ENCODE measurements at regions of chr3 and their contacts with region 1.

Region 1: DNA sequence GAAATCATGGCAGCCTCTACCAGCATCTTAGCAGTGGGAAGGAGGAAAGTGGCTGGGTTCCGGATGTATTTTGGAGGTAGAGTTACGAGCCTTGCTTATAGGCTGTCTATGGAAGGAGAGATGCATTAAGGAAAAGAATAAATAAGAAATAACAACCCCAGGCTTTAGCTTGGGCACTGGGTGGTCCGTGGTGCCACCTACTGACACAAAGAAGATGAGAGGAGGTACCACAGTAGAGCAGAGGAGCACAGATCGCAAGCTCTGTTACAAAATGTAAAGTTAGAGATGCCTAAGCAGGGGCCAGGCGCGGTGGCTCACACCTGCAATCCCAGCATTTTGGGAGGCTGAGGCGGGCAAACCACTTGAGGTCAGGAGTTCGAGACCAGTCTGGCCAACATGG is 74.8 kb downstream of the TMEM39A start:
- DNase-seq: no peak
- H3K4me3 ChIP-seq: no peak overlapping the region
- H3K27ac ChIP-seq: no peak overlapping the region
- H3K4me1 ChIP-seq: no peaks in the 10 kb centered on the region
- H3K27me3 ChIP-seq: no peaks in the 10 kb centered on the region
- CTCF ChIP-seq: peak; percentile 19 to 37 (median 30)
- EP300 ChIP-seq: no peak
- POLR2A ChIP-seq: no peak
- RAD21 ChIP-seq: peak; percentile 66 to 69

Region 2: GRCh38 chr3:119405315-119405714 is 16.7 kb after region 1 on chr3:
- CTCF ChIA-PET with region 1: interaction called, 10 read pairs
- POLR2A ChIA-PET with region 1: no interaction called
- DNase-seq: no peak
- H3K4me3 ChIP-seq: no peak overlapping the region
- H3K27ac ChIP-seq: no peak overlapping the region
- H3K4me1 ChIP-seq: peaks cover 0 to 8% (median 5%) of the 10 kb centered on the region in 4 experiments; a peak in 6 of 7 replicates
- H3K27me3 ChIP-seq: no peaks in the 10 kb centered on the region
- CTCF ChIP-seq: no peak
- EP300 ChIP-seq: no peak
- POLR2A ChIP-seq: no peak
- RAD21 ChIP-seq: no peak

Region 3: GRCh38 chr3:119428538-119428937 is 40.0 kb after region 1 on chr3:
- CTCF ChIA-PET with region 1: no interaction called
- POLR2A ChIA-PET with region 1: no interaction called
- DNase-seq: no peak
- H3K4me3 ChIP-seq: no peak overlapping the region
- H3K27ac ChIP-seq: no peak overlapping the region
- H3K4me1 ChIP-seq: no peaks in the 10 kb centered on the region
- H3K27me3 ChIP-seq: no peaks in the 10 kb centered on the region
- CTCF ChIP-seq: peak in 2 of 3 experiments; percentile 44 to 61; a peak in 2 of 4 replicates
- EP300 ChIP-seq: no peak
- POLR2A ChIP-seq: no peak
- RAD21 ChIP-seq: peak; percentile 72 to 73

Measured in H1 (cell line).